CD4-positive, alpha-beta T cell (primary cell): ENCODE measurements at regions of chr18 and their contacts with region 1.

Region 1: GRCh38 chr18:21031845-21032244 is 79.8 kb downstream of the ROCK1 start:
- DNase-seq: no peak
- ATAC-seq: no peak
- H3K4me3 ChIP-seq: no peak overlapping the region
- H3K4me3 Mint-ChIP-seq: no peak overlapping the region
- H3K27ac ChIP-seq: no peak overlapping the region
- H3K27ac Mint-ChIP-seq: no peak overlapping the region
- H3K4me1 ChIP-seq: no peaks in the 10 kb centered on the region
- H3K4me1 Mint-ChIP-seq: peaks cover 17% of the 10 kb centered on the region
- H3K27me3 ChIP-seq: no peaks in the 10 kb centered on the region
- H3K27me3 Mint-ChIP-seq: no peaks in the 10 kb centered on the region
- CTCF ChIP-seq: no peak

Region 2: GRCh38 chr18:20960735-20961134 is 71.1 kb before region 1 on chr18:
- CTCF ChIA-PET with region 1: no interaction called
- POLR2A ChIA-PET with region 1: no interaction called
- intact Hi-C with region 1: loop called in 1 of 2 experiments (anchors 2 kb)
- DNase-seq: no peak
- ATAC-seq: no peak
- H3K4me3 ChIP-seq: no peak overlapping the region
- H3K4me3 Mint-ChIP-seq: no peak overlapping the region
- H3K27ac ChIP-seq: no peak overlapping the region
- H3K27ac Mint-ChIP-seq: no peak overlapping the region
- H3K4me1 ChIP-seq: no peaks in the 10 kb centered on the region
- H3K4me1 Mint-ChIP-seq: no peaks in the 10 kb centered on the region
- H3K27me3 ChIP-seq: no peaks in the 10 kb centered on the region
- H3K27me3 Mint-ChIP-seq: no peaks in the 10 kb centered on the region
- CTCF ChIP-seq: no peak

Region 3: GRCh38 chr18:21191596-21192307 is 159.9 kb after region 1 on chr18:
- CTCF ChIA-PET with region 1: no interaction called
- POLR2A ChIA-PET with region 1: no interaction called
- intact Hi-C with region 1: no loop called
- DNase-seq: peak in 3 of 14 experiments; percentile 8 to 17 (median 11)
- ATAC-seq: no peak
- H3K4me3 ChIP-seq: no peak overlapping the region
- H3K4me3 Mint-ChIP-seq: no peak overlapping the region
- H3K27ac ChIP-seq: no peak overlapping the region
- H3K27ac Mint-ChIP-seq: no peak overlapping the region
- H3K4me1 ChIP-seq: no peaks in the 10 kb centered on the region
- H3K4me1 Mint-ChIP-seq: no peaks in the 10 kb centered on the region
- H3K27me3 ChIP-seq: peaks cover 0 to 7% of the 10 kb centered on the region in 2 experiments
- H3K27me3 Mint-ChIP-seq: peaks cover 31% of the 10 kb centered on the region
- CTCF ChIP-seq: peak; percentile 20